Astrocyte of the cerebellum (primary cell): ENCODE measurements at regions of chr12 and their contacts with region 1.

Region 1: DNA sequence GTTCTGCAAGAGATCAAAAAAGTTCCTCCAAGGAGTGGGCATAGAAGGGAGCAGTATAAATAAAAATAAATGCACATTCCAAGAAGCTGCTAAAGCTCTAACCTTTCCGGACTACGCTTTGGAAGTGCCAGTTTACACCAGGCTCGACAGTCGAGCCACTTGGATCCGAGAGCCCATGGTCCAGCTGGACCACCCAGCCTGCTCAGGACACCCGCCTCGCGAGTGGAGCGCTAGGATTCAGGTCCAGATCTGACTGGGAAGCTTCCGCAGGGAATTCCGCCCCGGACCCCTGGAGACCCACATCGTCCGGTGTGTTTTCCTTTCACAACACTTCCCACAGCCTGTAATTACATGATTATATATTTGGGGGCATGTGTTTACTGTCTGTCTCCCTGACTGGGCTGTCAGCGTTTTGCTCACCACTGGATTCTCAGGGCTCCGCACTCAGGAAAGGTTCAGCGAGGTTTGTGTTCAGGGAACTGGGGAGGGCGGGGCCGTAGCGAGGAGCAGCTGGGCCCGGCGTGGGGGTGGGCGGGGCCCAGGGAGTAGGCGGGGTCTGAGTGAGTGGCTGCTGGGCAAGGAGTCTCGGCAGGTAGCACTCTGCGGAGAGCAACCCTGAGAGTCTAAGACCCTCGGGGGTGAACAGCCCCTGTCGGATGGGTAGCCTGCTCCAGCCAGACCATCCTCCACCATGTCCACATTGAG is 52.3 kb upstream of the TMEM263 start:
- DNase-seq: peak; percentile 8
- H3K4me3 ChIP-seq: peak overlapping the region; percentile 43
- CTCF ChIP-seq: no peak

Region 2: DNA sequence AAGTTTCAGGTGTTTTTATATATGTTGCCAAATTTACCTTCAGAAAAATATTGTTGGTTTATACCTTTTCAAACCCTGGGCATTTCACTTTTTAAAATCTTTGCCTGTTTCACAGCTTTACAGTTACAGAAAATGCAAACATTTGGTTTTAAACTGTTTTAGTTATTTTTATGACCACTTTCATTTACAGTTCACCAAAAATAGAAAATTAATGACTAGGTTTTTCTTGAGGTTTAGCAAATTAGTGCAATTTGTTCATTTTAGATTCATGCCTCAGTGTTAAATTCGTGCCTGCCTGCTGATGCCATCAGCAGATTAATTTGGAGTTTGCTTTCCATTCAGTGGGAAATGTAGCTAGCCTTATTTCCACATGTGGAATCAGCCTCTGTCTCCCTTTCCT is 83.4 kb before region 1 on chr12:
- in situ Hi-C with region 1: no loop called
- DNase-seq: no peak
- H3K4me3 ChIP-seq: no peak overlapping the region
- CTCF ChIP-seq: no peak

Region 3: GRCh38 chr12:106831699-106832098 is 71.7 kb before region 1 on chr12:
- in situ Hi-C with region 1: no loop called
- DNase-seq: no peak
- H3K4me3 ChIP-seq: no peak overlapping the region
- CTCF ChIP-seq: no peak

Region 4: GRCh38 chr12:106954462-106955376 is 51.3 kb after region 1 on chr12:
- in situ Hi-C with region 1: loop called (anchors 5 kb)
- DNase-seq: no peak
- H3K4me3 ChIP-seq: peak overlapping the region; percentile 97
- CTCF ChIP-seq: no peak